MCF 10A (cell line): ENCODE measurements at regions of chr12 and their contacts with region 1.

Region 1: GRCh38 chr12:70242695-70243509 is at the start of gene CNOT2:
- DNase-seq: peak; percentile 92
- H3K4me3 Mint-ChIP-seq: peak within 1 kb of the TSS; percentile 95
- H3K27ac Mint-ChIP-seq: peak within 1 kb of the TSS; percentile 93
- H3K4me1 Mint-ChIP-seq: peaks cover 39% of the 10 kb centered on the region
- H3K27me3 Mint-ChIP-seq: no peaks in the 10 kb centered on the region
- CTCF ChIP-seq: no peak
- total RNA-seq, gene CNOT2: 88.3 and 91.0 TPM in 2 replicates

Region 2: GRCh38 chr12:69966409-69967207 is 276.3 kb before region 1 on chr12:
- CTCF ChIA-PET with region 1: no interaction called
- POLR2A ChIA-PET with region 1: interaction called, 14 read pairs
- intact Hi-C with region 1: loop called (anchors 1 kb)
- DNase-seq: peak; percentile 88
- H3K4me3 Mint-ChIP-seq: peak overlapping the region; percentile 6
- H3K27ac Mint-ChIP-seq: peak overlapping the region; percentile 86
- H3K4me1 Mint-ChIP-seq: peaks cover 23% of the 10 kb centered on the region
- H3K27me3 Mint-ChIP-seq: no peaks in the 10 kb centered on the region
- CTCF ChIP-seq: no peak

Region 3: DNA sequence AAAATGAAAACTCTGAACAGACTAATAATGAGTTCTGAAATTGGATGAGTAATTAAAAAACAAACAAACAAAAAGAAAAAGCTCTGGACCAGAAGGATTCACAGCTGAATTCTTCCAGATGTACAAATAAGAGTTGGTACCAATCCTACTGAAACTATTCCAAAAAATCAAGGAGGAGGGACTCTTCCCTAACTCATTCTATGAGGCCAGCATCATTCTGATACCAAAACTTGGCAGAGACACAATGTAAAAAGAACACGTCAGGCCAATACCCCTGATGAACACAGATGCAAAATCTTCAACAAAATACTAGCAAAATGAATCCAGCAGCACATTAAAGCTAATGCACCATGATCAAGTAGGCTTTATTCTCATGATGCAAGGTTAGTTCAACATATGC is 183.5 kb before region 1 on chr12:
- CTCF ChIA-PET with region 1: no interaction called
- POLR2A ChIA-PET with region 1: no interaction called
- intact Hi-C with region 1: no loop called
- DNase-seq: no peak
- H3K4me3 Mint-ChIP-seq: no peak overlapping the region
- H3K27ac Mint-ChIP-seq: peak overlapping the region; percentile 19
- H3K4me1 Mint-ChIP-seq: no peaks in the 10 kb centered on the region
- H3K27me3 Mint-ChIP-seq: no peaks in the 10 kb centered on the region
- CTCF ChIP-seq: no peak

Region 4: DNA sequence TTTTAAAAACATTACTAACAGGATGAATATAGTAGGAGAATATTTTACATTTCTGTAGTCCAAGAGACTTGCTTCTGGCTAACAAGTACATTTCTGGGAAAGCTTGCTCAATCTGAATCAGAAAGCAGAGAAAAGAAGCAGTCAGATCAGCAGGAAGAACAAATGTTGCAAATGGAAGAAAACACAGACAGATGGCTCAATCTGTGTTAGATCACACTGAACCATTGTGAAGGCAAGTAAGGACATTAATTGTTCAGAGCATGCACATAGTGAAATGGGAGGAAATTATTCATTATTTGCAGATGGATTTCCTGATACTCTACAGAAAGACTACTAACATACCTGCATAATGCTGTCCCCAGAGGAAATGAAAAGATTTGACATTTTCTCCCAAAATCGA is 64.9 kb before region 1 on chr12:
- CTCF ChIA-PET with region 1: no interaction called
- POLR2A ChIA-PET with region 1: no interaction called
- intact Hi-C with region 1: no loop called
- DNase-seq: no peak
- H3K4me3 Mint-ChIP-seq: no peak overlapping the region
- H3K27ac Mint-ChIP-seq: no peak overlapping the region
- H3K4me1 Mint-ChIP-seq: peaks cover 5% of the 10 kb centered on the region
- H3K27me3 Mint-ChIP-seq: no peaks in the 10 kb centered on the region
- CTCF ChIP-seq: no peak

Region 5: GRCh38 chr12:70290116-70290515 is 47.2 kb after region 1 on chr12:
- CTCF ChIA-PET with region 1: no interaction called
- POLR2A ChIA-PET with region 1: no interaction called
- intact Hi-C with region 1: no loop called
- DNase-seq: no peak
- H3K4me3 Mint-ChIP-seq: no peak overlapping the region
- H3K27ac Mint-ChIP-seq: peak overlapping the region; percentile 43
- H3K4me1 Mint-ChIP-seq: peaks cover 14% of the 10 kb centered on the region
- H3K27me3 Mint-ChIP-seq: no peaks in the 10 kb centered on the region
- CTCF ChIP-seq: no peak

Region 6: GRCh38 chr12:70338526-70338925 is 95.6 kb after region 1 on chr12:
- CTCF ChIA-PET with region 1: no interaction called
- POLR2A ChIA-PET with region 1: interaction called, 5 read pairs
- intact Hi-C with region 1: loop called (anchors 10 kb)
- DNase-seq: no peak
- H3K4me3 Mint-ChIP-seq: no peak overlapping the region
- H3K27ac Mint-ChIP-seq: no peak overlapping the region
- H3K4me1 Mint-ChIP-seq: no peaks in the 10 kb centered on the region
- H3K27me3 Mint-ChIP-seq: no peaks in the 10 kb centered on the region
- CTCF ChIP-seq: no peak